HepG2 (cell line): ENCODE measurements at regions of chr2 and their contacts with region 1.

Region 1: DNA sequence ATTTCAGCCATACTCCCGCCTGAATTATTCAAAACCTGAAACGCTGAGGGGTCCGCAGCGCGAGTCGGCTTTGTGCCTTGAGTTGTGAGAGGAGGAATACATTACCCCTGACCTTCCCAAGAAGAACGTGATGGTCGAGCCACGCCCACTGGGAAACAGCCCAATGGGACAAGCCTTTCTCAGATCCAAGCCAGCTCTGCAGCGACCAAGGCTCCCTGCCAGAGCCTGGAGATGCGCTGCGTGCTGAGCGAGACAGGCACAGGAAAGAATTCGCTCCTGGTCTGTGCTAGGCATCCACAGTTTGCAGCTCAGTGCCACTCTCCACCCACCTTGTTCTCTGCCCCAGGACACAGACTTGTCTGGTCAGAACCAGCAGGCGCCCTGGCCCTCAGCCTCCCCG is 74.1 kb upstream of the GLI2 start:
- DNase-seq: no peak
- ATAC-seq: no peak; the same call in 2 of the 3 replicates
- H3K4me3 ChIP-seq: no peak overlapping the region
- H3K27ac ChIP-seq: no peak overlapping the region
- H3K4me1 ChIP-seq: 0 out of 2 replicates have a peak, but pooled peaks cover 6% of the 10 kb centered on the region
- H3K27me3 ChIP-seq: peaks cover 0 to 48% of the 10 kb centered on the region in 2 experiments; a peak in 4 of 5 replicates
- CTCF ChIP-seq: no peak
- EP300 ChIP-seq: no peak
- POLR2A ChIP-seq: no peak
- RAD21 ChIP-seq: no peak

Region 2: DNA sequence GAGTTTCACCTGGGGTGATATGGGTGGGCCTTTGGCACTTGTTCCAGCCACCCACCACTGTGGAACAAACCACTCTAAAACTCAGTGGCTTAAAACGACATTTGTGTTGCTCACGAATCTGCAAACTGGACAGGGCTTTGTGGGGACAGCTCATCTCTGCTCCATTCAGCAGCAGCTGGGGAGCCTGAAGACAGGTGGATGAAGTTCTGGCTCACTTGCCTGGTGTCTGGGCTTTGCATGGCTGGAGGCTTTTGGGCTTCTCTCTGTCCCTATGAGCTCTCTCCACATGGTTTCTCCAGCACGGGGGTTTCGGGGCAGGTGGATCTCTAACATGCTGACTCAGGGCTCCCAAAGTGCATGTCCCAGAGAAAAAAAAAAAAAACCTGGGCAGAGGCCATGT is 18.9 kb before region 1 on chr2:
- CTCF ChIA-PET with region 1: no interaction called
- POLR2A ChIA-PET with region 1: interaction called, 3 read pairs
- in situ Hi-C with region 1: no loop called
- intact Hi-C with region 1: loop called (anchors 2 kb)
- DNase-seq: no peak
- ATAC-seq: no peak
- H3K4me3 ChIP-seq: no peak overlapping the region
- H3K27ac ChIP-seq: no peak overlapping the region
- H3K4me1 ChIP-seq: peaks cover 13% of the 10 kb centered on the region; the same call in 1 of the 2 replicates
- H3K27me3 ChIP-seq: peaks cover 3 to 37% of the 10 kb centered on the region in 2 experiments; a peak in 3 of 5 replicates
- CTCF ChIP-seq: no peak
- EP300 ChIP-seq: no peak
- POLR2A ChIP-seq: no peak
- RAD21 ChIP-seq: no peak

Region 3: DNA sequence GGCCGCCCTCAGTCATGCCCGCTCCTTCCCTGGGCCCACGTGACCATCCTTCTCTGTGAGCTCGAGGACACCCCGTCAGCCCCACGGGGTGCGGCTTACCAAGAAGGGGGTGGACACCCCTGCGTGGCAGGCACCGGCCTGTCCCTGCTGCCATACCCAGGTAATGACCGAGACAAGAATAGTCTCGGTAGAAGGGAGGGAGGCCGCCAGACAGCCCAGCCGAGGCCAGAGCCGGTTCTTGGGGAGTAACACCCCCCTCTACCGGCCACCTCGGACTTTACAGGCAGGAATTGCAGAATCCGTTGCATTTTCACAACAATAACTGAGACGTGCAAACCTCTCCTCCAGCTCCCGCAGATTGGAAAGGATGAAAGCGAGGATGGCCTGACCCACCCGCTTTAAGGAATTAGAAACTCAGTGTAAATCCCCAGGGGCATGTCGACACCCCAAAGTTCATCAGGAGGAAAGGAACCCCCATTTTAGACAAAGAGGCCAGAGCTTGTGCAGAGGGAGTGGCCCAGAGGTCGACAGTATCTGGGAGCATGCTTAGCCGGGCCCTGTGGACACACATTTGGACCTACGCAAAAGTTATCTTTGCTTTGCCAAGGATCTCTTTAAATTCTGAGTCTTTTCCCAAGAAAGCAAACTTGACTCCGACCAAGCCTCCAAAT is 14.0 kb after region 1 on chr2:
- CTCF ChIA-PET with region 1: no interaction called
- POLR2A ChIA-PET with region 1: no interaction called
- in situ Hi-C with region 1: no loop called
- intact Hi-C with region 1: no loop called
- DNase-seq: peak; percentile 50
- ATAC-seq: peak; percentile 68
- H3K4me3 ChIP-seq: no peak overlapping the region
- H3K27ac ChIP-seq: no peak overlapping the region
- H3K4me1 ChIP-seq: peaks cover 5% of the 10 kb centered on the region; the same call in 1 of the 2 replicates
- H3K27me3 ChIP-seq: peaks cover 6 to 78% of the 10 kb centered on the region in 2 experiments; a peak in 3 of 5 replicates
- CTCF ChIP-seq: peak; percentile 93
- EP300 ChIP-seq: no peak
- POLR2A ChIP-seq: no peak
- RAD21 ChIP-seq: peak; percentile 91